Activated CD4-positive, alpha-beta memory T cell treated with anti-CD3 and anti-CD28 coated beads for 36 hours (primary cell): ENCODE measurements at regions of chr16 and their contacts with region 1.

Region 1: GRCh38 chr16:50335196-50335958 is 33.4 kb downstream of the BRD7 start:
- DNase-seq: peak; percentile 70
- H3K4me3 Mint-ChIP-seq: peak overlapping the region; percentile 32
- H3K27ac Mint-ChIP-seq: peak overlapping the region; percentile 90
- H3K4me1 Mint-ChIP-seq: peaks cover 68% of the 10 kb centered on the region
- H3K27me3 Mint-ChIP-seq: no peaks in the 10 kb centered on the region

Region 2: GRCh38 chr16:50065624-50066481 is 269.5 kb before region 1 on chr16 and contains the start of gene HEATR3:
- CTCF ChIA-PET with region 1: no interaction called
- POLR2A ChIA-PET with region 1: no interaction called
- intact Hi-C with region 1: loop called (anchors 2 kb)
- DNase-seq: peak; percentile 98
- H3K4me3 Mint-ChIP-seq: peak within 1 kb of the TSS; percentile 90
- H3K27ac Mint-ChIP-seq: peak within 1 kb of the TSS; percentile 87
- H3K4me1 Mint-ChIP-seq: peaks cover 31% of the 10 kb centered on the region
- H3K27me3 Mint-ChIP-seq: no peaks in the 10 kb centered on the region
- total RNA-seq, gene HEATR3: 17.6 to 18.6 TPM

Region 3: DNA sequence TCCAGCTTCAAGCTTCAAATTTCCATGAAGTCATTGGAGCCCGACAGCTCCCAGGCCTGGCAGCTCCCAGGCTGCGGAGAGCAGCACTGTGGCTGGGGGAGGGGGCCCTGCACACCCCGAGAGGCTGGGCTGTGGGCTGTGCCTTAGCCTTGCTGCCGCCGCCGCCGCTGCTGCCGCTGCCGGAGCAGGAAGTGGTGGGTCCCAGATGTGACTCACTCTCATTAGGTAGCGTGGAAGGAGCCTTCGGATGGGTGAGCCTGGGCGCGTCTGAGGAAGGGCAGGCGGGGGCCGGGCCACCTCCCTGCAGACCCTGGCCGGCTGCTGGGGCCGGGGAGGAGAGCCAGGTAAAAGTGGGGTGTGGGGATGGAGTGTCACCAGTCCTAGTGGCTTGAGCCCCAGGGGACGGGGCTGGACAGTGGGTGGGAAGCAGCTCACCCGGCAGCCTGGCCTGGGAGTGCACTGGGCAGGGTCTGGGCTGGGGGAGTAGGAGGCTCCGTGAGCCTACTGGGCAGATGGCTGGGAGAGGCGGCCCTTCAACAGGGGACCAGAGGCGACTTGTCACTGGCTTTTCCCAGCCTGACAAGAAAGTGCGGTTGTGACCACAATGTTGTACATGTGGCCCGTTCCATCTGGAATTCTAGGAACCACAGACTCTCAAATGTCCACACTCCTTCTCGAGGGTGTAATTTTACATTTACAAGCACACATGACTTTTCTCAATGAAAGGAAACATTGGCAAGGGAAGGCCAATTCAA is 68.9 kb before region 1 on chr16 and contains the start of gene ADCY7:
- CTCF ChIA-PET with region 1: interaction called, 4 read pairs
- POLR2A ChIA-PET with region 1: interaction called, 9 read pairs
- intact Hi-C with region 1: loop called (anchors 1 kb)
- DNase-seq: peak; percentile 91
- H3K4me3 Mint-ChIP-seq: peak within 1 kb of the TSS; percentile 94
- H3K27ac Mint-ChIP-seq: peak within 1 kb of the TSS; percentile 97
- H3K4me1 Mint-ChIP-seq: peaks cover 71% of the 10 kb centered on the region
- H3K27me3 Mint-ChIP-seq: no peaks in the 10 kb centered on the region
- total RNA-seq, gene ADCY7: 100.0 to 107 TPM

Region 4: DNA sequence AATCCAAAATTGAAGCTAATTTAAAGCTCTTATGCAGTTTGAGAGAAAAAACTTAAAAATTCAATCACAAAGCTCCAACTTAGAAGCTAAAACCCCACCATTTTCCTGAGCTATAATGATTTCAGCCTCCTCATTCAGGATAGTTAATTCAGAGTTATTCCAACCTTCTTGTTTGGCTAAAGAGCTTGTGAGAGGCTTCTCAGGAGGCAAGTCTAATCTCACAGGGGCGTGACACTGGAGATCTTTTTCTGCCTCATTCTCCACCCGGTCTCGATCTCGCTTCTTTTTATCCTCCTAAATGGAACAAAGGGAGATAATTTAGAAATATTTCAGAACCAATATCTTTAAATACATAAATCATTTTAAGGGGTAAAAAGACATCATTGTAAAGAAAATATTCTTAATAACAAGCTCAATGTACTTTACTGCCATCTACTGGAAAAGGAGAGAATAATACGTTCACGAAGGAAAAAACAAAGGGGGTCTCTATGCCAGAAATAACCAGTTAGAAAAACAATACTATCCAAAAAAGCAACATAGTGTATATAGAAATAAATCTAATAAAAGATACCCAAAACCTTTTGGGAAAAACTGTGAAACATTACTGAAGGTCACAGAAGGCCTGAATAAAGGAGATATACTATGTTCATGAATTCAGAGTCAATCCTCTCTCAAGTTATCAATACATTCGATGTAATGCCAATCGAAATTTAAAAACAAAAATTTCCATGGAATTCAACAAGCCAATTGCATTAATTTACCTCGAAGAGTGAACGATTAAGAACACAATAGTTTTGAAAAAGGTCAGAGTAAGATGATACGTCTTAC is 19.5 kb after region 1 on chr16:
- CTCF ChIA-PET with region 1: interaction called, 302 read pairs
- POLR2A ChIA-PET with region 1: interaction called, 4 read pairs
- intact Hi-C with region 1: loop called (anchors 2 kb)
- DNase-seq: no peak
- H3K4me3 Mint-ChIP-seq: no peak overlapping the region
- H3K27ac Mint-ChIP-seq: no peak overlapping the region
- H3K4me1 Mint-ChIP-seq: peaks cover 30% of the 10 kb centered on the region
- H3K27me3 Mint-ChIP-seq: no peaks in the 10 kb centered on the region

Region 5: GRCh38 chr16:50681021-50681885 is 345.9 kb after region 1 on chr16 and contains the start of gene SNX20:
- CTCF ChIA-PET with region 1: no interaction called
- POLR2A ChIA-PET with region 1: no interaction called
- intact Hi-C with region 1: loop called (anchors 5 kb)
- DNase-seq: peak; percentile 79
- H3K4me3 Mint-ChIP-seq: peak within 1 kb of the TSS; percentile 89
- H3K27ac Mint-ChIP-seq: peak within 1 kb of the TSS; percentile 91
- H3K4me1 Mint-ChIP-seq: peaks cover 85% of the 10 kb centered on the region
- H3K27me3 Mint-ChIP-seq: no peaks in the 10 kb centered on the region
- total RNA-seq, gene SNX20: 55.4 to 56.9 TPM

Region 6: GRCh38 chr16:50763211-50763610 is 427.8 kb after region 1 on chr16:
- CTCF ChIA-PET with region 1: no interaction called
- POLR2A ChIA-PET with region 1: interaction called, 3 read pairs
- intact Hi-C with region 1: loop called (anchors 2 kb)
- DNase-seq: no peak
- H3K4me3 Mint-ChIP-seq: no peak overlapping the region
- H3K27ac Mint-ChIP-seq: peak overlapping the region; percentile 43
- H3K4me1 Mint-ChIP-seq: peaks cover 89% of the 10 kb centered on the region
- H3K27me3 Mint-ChIP-seq: no peaks in the 10 kb centered on the region